Activated naive CD4-positive, alpha-beta T cell treated with anti-CD3 and anti-CD28 coated beads for 36 hours (primary cell): ENCODE measurements at regions of chr5 and their contacts with region 1.

Region 1: GRCh38 chr5:43105369-43106289 is 15.1 kb upstream of the ZNF131 start:
- DNase-seq: peak; percentile 92
- H3K4me3 Mint-ChIP-seq: peak overlapping the region; percentile 81
- H3K27ac Mint-ChIP-seq: peak overlapping the region; percentile 87
- H3K4me1 Mint-ChIP-seq: peaks cover 42% of the 10 kb centered on the region
- H3K27me3 Mint-ChIP-seq: no peaks in the 10 kb centered on the region

Region 2: GRCh38 chr5:42908509-42909488 is 196.8 kb before region 1 on chr5:
- CTCF ChIA-PET with region 1: interaction called, 7 read pairs
- intact Hi-C with region 1: loop called (anchors 1 kb)
- DNase-seq: peak; percentile 94
- H3K4me3 Mint-ChIP-seq: peak overlapping the region; percentile 92
- H3K27ac Mint-ChIP-seq: peak overlapping the region; percentile 75
- H3K4me1 Mint-ChIP-seq: peaks cover 10% of the 10 kb centered on the region
- H3K27me3 Mint-ChIP-seq: peaks cover 10% of the 10 kb centered on the region

Region 3: GRCh38 chr5:43034591-43034968 is 71.0 kb before region 1 on chr5:
- CTCF ChIA-PET with region 1: no interaction called
- intact Hi-C with region 1: no loop called
- DNase-seq: no peak
- H3K4me3 Mint-ChIP-seq: no peak overlapping the region
- H3K27ac Mint-ChIP-seq: no peak overlapping the region
- H3K4me1 Mint-ChIP-seq: peaks cover 39% of the 10 kb centered on the region
- H3K27me3 Mint-ChIP-seq: no peaks in the 10 kb centered on the region

Region 4: DNA sequence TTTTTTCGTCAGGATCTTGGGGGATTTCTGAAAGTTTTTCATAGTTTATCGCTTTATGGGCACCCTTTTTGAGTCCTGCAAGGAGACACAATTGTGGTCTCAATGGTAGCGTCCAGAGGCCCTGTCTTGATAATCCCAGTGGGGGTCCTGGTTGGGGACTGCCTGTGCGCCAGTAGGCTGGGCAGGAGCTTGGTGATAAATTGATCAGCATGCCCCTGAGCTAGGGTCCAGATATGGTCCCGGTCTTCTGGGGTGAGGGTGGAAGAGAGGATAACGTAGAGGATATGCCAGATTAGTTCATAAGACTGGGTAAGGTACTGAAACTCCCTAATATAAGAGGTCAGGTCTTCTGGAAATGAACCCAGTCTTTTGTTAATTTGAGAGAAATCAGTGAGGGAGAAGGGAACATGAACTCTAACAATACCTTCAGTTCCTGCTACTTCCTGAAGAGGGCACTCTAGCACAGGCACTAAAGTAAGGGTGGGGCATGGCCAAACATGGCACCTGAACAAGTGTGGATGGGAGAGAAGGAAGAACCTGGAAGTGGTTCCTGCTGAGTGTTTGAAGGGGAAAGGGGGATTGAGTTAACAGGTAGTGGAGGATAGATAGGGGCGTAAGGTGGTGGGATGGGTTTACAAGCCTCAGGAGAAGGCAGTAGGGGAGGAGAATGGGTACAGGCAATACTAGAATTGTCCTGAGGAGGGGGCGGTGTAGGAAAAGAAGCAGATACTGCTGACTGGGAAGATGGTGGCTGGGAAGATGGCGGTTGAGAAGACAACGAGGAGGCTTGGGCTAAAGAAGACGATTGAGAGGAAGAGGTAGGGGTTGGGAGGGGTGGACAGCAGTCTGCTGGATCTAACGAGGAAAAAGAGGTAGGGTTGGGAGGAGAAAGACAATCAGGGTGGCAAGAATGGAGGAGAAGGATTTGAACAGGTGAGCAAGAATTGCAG is 31.8 kb before region 1 on chr5:
- CTCF ChIA-PET with region 1: interaction called, 4 read pairs
- intact Hi-C with region 1: loop called (anchors 1 kb)
- DNase-seq: peak; percentile 70
- H3K4me3 Mint-ChIP-seq: no peak overlapping the region
- H3K27ac Mint-ChIP-seq: peak overlapping the region; percentile 43
- H3K4me1 Mint-ChIP-seq: peaks cover 39% of the 10 kb centered on the region
- H3K27me3 Mint-ChIP-seq: no peaks in the 10 kb centered on the region

Region 5: DNA sequence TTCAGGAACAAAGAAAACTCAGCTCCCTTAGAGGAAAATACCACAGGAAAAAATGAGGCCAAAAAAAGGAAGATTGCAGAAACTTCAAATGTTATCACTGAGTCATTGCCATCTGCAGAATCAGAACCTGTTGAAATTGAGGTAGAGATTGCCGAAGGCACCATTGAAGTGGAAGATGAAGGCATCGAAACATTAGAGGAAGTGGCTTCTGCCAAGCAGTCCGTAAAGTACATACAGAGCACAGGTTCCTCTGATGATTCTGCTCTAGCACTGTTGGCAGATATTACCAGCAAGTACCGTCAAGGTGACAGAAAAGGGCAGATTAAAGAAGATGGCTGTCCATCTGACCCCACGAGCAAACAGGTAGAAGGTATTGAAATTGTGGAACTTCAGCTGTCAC is 55.6 kb after region 1 on chr5:
- CTCF ChIA-PET with region 1: no interaction called
- intact Hi-C with region 1: no loop called
- DNase-seq: peak; percentile 38
- H3K4me3 Mint-ChIP-seq: no peak overlapping the region
- H3K27ac Mint-ChIP-seq: peak overlapping the region; percentile 44
- H3K4me1 Mint-ChIP-seq: peaks cover 24% of the 10 kb centered on the region
- H3K27me3 Mint-ChIP-seq: no peaks in the 10 kb centered on the region

Region 6: DNA sequence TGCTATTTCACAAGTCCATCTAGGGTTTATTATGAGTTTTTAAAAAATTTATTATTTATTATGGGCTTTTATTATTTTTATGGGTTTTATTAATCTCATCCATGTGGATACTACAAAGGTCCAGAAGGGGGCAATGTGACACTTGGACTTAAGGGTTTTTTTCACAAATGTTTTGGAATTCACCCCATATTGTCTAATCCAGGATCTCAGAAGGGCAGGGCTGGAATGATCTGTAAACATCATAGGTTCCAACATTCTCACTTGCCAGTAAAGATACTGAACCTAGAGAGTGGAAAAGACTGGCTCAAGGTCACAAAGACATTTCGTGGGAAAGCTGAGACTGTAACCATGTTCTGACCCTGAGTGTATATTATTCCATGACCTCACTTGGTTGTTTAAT is 122.0 kb after region 1 on chr5:
- CTCF ChIA-PET with region 1: interaction called, 3 read pairs
- intact Hi-C with region 1: loop called (anchors 2 kb)
- DNase-seq: no peak
- H3K4me3 Mint-ChIP-seq: no peak overlapping the region
- H3K27ac Mint-ChIP-seq: no peak overlapping the region
- H3K4me1 Mint-ChIP-seq: no peaks in the 10 kb centered on the region
- H3K27me3 Mint-ChIP-seq: no peaks in the 10 kb centered on the region

Region 7: GRCh38 chr5:43711176-43711895 is 605.7 kb after region 1 on chr5:
- CTCF ChIA-PET with region 1: no interaction called
- intact Hi-C with region 1: no loop called
- DNase-seq: no peak
- H3K4me3 Mint-ChIP-seq: no peak overlapping the region
- H3K27ac Mint-ChIP-seq: no peak overlapping the region
- H3K4me1 Mint-ChIP-seq: no peaks in the 10 kb centered on the region
- H3K27me3 Mint-ChIP-seq: no peaks in the 10 kb centered on the region

Region 8: GRCh38 chr5:44875661-44876605 is 1770.3 kb after region 1 on chr5:
- CTCF ChIA-PET with region 1: no interaction called
- intact Hi-C with region 1: loop called (anchors 2 kb)
- DNase-seq: peak; percentile 52
- H3K4me3 Mint-ChIP-seq: no peak overlapping the region
- H3K27ac Mint-ChIP-seq: peak overlapping the region; percentile 84
- H3K4me1 Mint-ChIP-seq: peaks cover 25% of the 10 kb centered on the region
- H3K27me3 Mint-ChIP-seq: no peaks in the 10 kb centered on the region